Activated CD4-positive, alpha-beta T cell treated with anti-CD3 and anti-CD28 coated beads, Interleukin-2, amount 10 ng/mL, durations not matched to agents 24 days and 14 days (primary cell): ENCODE measurements at regions of chr13 and their contacts with region 1.

Region 1: GRCh38 chr13:24512197-24512907 is at the start of gene PARP4:
- DNase-seq: peak; percentile 93
- H3K4me3 Mint-ChIP-seq: peak within 1 kb of the TSS; percentile 90
- H3K27ac Mint-ChIP-seq: peak within 1 kb of the TSS; percentile 98
- H3K4me1 Mint-ChIP-seq: peaks cover 30% of the 10 kb centered on the region
- H3K27me3 Mint-ChIP-seq: peaks cover 3% of the 10 kb centered on the region
- total RNA-seq, gene PARP4: 33.0 and 34.8 TPM in 2 replicates

Region 2: DNA sequence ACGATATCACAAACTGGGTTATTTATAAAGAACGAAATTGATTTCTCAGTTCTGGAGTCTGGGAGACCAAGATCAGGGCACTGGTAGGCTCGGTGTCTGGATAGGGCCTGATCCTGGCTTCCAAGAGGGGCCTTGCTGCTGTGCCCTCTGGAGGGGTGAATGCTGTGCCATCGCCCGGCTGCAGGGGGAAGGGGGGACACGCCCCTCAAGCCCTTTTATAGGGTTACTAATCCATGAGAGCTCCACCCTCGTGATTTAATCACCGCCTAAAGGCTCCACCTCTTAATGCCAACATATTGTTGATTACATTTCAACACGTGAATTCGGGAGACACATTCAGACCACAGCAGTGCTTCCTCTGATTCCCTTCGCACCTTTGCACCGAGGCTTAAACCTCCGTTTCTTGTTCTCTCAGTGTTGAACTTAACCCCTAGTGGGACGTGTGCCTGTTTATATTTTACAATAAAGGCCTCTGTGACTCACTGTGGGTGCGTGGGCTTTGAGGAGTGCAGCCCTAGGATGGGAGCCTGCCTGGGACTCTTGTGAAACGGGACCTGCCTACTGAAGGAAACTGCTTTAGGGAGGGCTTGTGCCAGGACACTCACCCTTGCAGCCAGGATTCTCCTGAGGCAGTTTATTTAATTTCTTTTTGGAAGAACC is 404.3 kb before region 1 on chr13:
- intact Hi-C with region 1: no loop called
- DNase-seq: no peak
- H3K4me3 Mint-ChIP-seq: no peak overlapping the region
- H3K27ac Mint-ChIP-seq: no peak overlapping the region
- H3K4me1 Mint-ChIP-seq: no peaks in the 10 kb centered on the region
- H3K27me3 Mint-ChIP-seq: peaks cover 37% of the 10 kb centered on the region

Region 3: GRCh38 chr13:24160454-24161009 is 351.8 kb before region 1 on chr13 and contains the start of gene SPATA13:
- intact Hi-C with region 1: loop called (anchors 1 kb)
- DNase-seq: peak; percentile 97
- H3K4me3 Mint-ChIP-seq: peak within 1 kb of the TSS; percentile 95
- H3K27ac Mint-ChIP-seq: peak within 1 kb of the TSS; percentile 90
- H3K4me1 Mint-ChIP-seq: peaks cover 21% of the 10 kb centered on the region
- H3K27me3 Mint-ChIP-seq: peaks cover 27% of the 10 kb centered on the region
- total RNA-seq, gene SPATA13: 41.9 and 43.6 TPM in 2 replicates

Region 4: GRCh38 chr13:24270639-24271141 is 241.7 kb before region 1 on chr13:
- intact Hi-C with region 1: loop called (anchors 1 kb)
- DNase-seq: peak; percentile 89
- H3K4me3 Mint-ChIP-seq: peak overlapping the region; percentile 91
- H3K27ac Mint-ChIP-seq: peak overlapping the region; percentile 96
- H3K4me1 Mint-ChIP-seq: peaks cover 82% of the 10 kb centered on the region
- H3K27me3 Mint-ChIP-seq: peaks cover 2% of the 10 kb centered on the region

Region 5: DNA sequence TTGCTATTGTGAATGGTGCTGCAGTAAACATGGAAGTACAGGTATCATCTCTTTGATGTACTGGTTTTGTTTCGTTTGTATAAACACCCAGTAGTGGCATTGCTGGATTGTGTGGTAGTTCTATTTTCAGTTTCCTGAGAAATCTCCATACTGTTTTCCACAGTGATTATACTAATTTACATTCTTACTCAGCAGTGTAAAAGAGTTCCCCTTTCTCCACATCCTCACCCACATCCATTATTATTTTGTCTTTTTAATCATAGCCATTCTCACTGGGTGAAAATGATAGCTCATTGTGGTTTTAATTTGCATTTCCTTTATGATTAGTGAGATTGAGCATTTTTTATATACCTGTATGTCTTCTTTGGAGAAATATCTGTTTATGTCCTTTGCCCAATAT is 62.5 kb after region 1 on chr13:
- intact Hi-C with region 1: loop called (anchors 2 kb)
- DNase-seq: no peak
- H3K4me3 Mint-ChIP-seq: no peak overlapping the region
- H3K27ac Mint-ChIP-seq: no peak overlapping the region
- H3K4me1 Mint-ChIP-seq: peaks cover 13% of the 10 kb centered on the region
- H3K27me3 Mint-ChIP-seq: peaks cover 18% of the 10 kb centered on the region

Region 6: GRCh38 chr13:24709186-24709913 is 197.0 kb after region 1 on chr13:
- intact Hi-C with region 1: loop called (anchors 5 kb)
- DNase-seq: peak; percentile 89
- H3K4me3 Mint-ChIP-seq: peak overlapping the region; percentile 71
- H3K27ac Mint-ChIP-seq: peak overlapping the region; percentile 64
- H3K4me1 Mint-ChIP-seq: peaks cover 24% of the 10 kb centered on the region
- H3K27me3 Mint-ChIP-seq: peaks cover 6% of the 10 kb centered on the region